Gastrocnemius medialis (tissue), 4 donors: ENCODE measurements at regions of chr14 and their contacts with region 1.

Region 1: DNA sequence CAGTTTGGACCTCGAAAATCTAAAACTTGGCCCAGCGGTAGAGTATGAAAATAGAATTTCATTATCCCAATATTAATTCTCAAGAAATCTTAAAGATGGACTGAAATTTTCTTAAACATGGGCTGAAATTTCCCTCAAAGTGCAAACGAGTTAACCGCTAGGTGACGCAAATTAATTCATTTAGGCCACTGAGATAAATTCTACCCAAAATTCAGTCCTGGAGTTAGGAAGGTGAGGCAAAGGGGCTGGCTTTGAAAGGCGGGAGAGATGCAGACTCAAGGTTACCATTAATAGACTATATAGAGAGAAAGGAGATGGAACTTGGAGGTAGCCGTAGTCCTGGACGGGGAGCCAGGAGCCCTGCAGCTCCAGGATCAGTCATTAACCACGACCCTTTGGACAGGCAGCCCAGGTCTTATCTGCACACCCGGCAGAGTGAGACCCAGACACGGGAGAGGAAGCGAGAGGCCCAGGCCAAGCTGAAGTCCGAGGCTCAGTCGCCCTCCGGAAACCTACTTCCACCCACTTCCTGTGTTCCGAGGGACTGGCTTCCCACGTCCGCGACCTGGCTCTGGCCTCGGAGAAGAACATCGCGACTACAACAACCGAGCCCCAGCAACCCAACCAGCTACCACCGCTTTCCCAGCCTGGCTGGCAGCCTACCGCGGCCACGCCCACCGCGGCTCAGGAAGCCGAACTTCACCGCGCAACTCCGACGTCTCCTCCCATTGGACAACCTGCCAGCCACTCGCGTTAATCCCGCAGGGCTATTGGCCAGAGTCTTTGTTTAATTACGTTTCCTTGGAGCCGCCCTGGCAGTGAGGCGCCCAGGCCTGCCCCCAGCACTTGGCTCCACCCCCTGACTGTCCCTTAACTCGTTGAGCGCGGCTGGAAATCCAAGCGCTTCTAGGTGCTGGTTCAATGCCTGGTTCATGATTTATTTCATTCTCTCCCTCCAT is at the start of gene EFCAB11:
- DNase-seq: peak; percentile 96 to 98
- ATAC-seq: peak; percentile 90 to 91
- H3K4me3 ChIP-seq: peak within 1 kb of the TSS; percentile 63 to 99 (median 73)
- H3K27ac ChIP-seq: peak within 1 kb of the TSS; percentile 82 to 87 (median 84)
- H3K4me1 ChIP-seq: peaks cover 10 to 13% of the 10 kb centered on the region in 2 donors
- H3K27me3 ChIP-seq: no peaks in the 10 kb centered on the region
- CTCF ChIP-seq: no peak
- POLR2A ChIP-seq: no peak
- total RNA-seq, gene EFCAB11: 0.69 to 1.6 (median 1.6) TPM

Region 2: GRCh38 chr14:87992718-87993628 is 1961.4 kb before region 1 on chr14 and contains the start of gene GALC:
- in situ Hi-C with region 1: no loop called
- intact Hi-C with region 1: loop called (anchors 5 kb)
- DNase-seq: peak; percentile 88 to 89
- ATAC-seq: peak; percentile 91 to 93
- H3K4me3 ChIP-seq: peak within 1 kb of the TSS; percentile 74 to 88 (median 80)
- H3K27ac ChIP-seq: peak within 1 kb of the TSS; percentile 86 to 92 (median 88)
- H3K4me1 ChIP-seq: peaks cover 13 to 18% of the 10 kb centered on the region in 2 donors
- H3K27me3 ChIP-seq: no peaks in the 10 kb centered on the region
- CTCF ChIP-seq: no peak
- POLR2A ChIP-seq: peak in 1 of 2 donors; percentile 54
- total RNA-seq, gene GALC: 10.5 to 23.2 (median 14.6) TPM

Region 3: GRCh38 chr14:88385345-88386101 is 1568.8 kb before region 1 on chr14 and contains the start of gene SPATA7:
- in situ Hi-C with region 1: no loop called
- intact Hi-C with region 1: loop called (anchors 10 kb)
- DNase-seq: peak; percentile 80 to 84
- ATAC-seq: peak; percentile 93 to 98
- H3K4me3 ChIP-seq: peak within 1 kb of the TSS; percentile 83 to 98 (median 91)
- H3K27ac ChIP-seq: peak within 1 kb of the TSS; percentile 71 to 82 (median 77)
- H3K4me1 ChIP-seq: peaks cover 13% of the 10 kb centered on the region in 2 donors
- H3K27me3 ChIP-seq: no peaks in the 10 kb centered on the region
- CTCF ChIP-seq: no peak
- POLR2A ChIP-seq: peak; percentile 51 to 53
- total RNA-seq, gene SPATA7: 7.2 to 11.2 (median 10.1) TPM

Region 4: GRCh38 chr14:88551094-88551870 is 1403.1 kb before region 1 on chr14:
- in situ Hi-C with region 1: no loop called
- intact Hi-C with region 1: loop called (anchors 10 kb)
- DNase-seq: peak; percentile 55 to 77
- ATAC-seq: peak; percentile 81 to 83
- H3K4me3 ChIP-seq: peak overlapping the region; percentile 74 to 82 (median 77)
- H3K27ac ChIP-seq: peak overlapping the region; percentile 79 to 94 (median 84)
- H3K4me1 ChIP-seq: peaks cover 24 to 35% of the 10 kb centered on the region in 2 donors
- H3K27me3 ChIP-seq: no peaks in the 10 kb centered on the region
- CTCF ChIP-seq: peak; percentile 30 to 47 (median 43)
- POLR2A ChIP-seq: peak; percentile 49 to 56

Region 5: GRCh38 chr14:89701211-89702043 is 252.9 kb before region 1 on chr14:
- in situ Hi-C with region 1: no loop called
- intact Hi-C with region 1: loop called (anchors 2 kb)
- DNase-seq: peak; percentile 67 to 78
- ATAC-seq: peak; percentile 80 to 82
- H3K4me3 ChIP-seq: peak overlapping the region; percentile 61 to 74 (median 68)
- H3K27ac ChIP-seq: peak overlapping the region; percentile 41 to 72 (median 68)
- H3K4me1 ChIP-seq: peaks cover 12 to 17% of the 10 kb centered on the region in 2 donors
- H3K27me3 ChIP-seq: no peaks in the 10 kb centered on the region
- CTCF ChIP-seq: no peak
- POLR2A ChIP-seq: no peak

Region 6: DNA sequence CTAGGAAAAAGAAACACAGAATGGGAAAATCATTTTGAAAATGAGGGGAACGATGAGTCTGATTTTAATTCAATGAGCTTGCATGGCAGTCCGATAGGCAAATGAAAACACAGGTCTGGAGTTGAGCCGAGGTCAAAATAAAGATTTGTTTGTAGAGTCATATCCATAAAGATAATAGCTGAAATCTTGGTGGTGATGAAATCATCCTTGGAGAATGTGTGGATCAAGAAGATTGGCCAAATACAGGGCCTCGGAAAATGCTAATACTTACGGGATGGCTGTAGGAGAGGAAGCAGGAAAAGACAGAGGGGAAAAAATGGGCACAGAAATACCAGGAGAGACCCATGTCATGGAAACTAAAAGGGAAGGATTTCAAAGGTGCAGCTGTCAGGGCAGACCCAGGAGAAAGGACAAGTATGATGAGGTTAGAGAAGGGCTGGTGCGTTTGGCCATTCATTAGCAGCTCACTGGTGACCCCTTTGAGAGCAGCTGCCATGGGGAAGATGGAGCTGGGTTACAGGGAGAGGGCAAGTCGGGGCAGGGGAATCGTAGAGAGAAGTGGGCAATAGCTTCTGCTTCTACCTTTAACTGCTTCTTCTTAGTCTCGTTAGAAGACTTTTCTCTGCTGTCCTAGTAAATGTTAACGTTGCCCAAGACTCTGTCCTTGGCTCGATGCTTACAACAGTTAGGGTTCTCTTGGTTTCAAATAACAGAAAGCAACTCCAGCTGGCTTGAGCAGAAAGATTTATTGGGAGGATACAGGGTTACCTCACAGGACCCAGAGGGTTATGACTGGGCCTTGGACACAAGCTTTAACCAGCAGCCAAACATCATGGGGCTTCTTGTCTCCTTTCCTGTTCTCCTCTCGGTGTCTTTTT is 161.6 kb before region 1 on chr14:
- in situ Hi-C with region 1: no loop called
- intact Hi-C with region 1: no loop called
- DNase-seq: peak; percentile 87 to 88
- ATAC-seq: peak; percentile 98 to 99
- H3K4me3 ChIP-seq: peak overlapping the region in 1 of 4 donors; percentile 29
- H3K27ac ChIP-seq: peak overlapping the region; percentile 81 to 91 (median 89)
- H3K4me1 ChIP-seq: peaks cover 18 to 26% of the 10 kb centered on the region in 2 donors
- H3K27me3 ChIP-seq: no peaks in the 10 kb centered on the region
- CTCF ChIP-seq: no peak
- POLR2A ChIP-seq: no peak

Region 7: DNA sequence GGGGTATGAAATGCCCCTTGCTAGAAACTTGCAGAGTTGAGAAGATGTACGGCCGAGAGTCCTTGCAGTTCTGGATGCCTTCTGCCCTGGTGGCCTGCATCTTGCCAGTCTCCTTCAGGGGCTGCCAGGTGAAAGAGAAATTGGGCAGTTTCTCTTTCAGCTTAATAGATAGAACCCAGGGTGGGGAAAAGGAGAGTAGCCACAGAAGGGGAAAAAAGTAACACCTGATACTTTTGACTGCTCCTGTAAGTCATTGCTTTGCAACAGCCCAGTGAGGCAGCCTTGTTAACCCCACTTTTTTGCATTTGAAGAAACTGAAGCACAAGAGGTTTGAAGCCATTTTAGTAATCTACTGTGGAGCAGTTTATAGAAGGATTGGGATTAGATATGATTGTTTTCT is 29.0 kb after region 1 on chr14:
- in situ Hi-C with region 1: no loop called
- intact Hi-C with region 1: no loop called
- DNase-seq: no peak
- ATAC-seq: no peak
- H3K4me3 ChIP-seq: no peak overlapping the region
- H3K27ac ChIP-seq: no peak overlapping the region
- H3K4me1 ChIP-seq: no peaks in the 10 kb centered on the region
- H3K27me3 ChIP-seq: no peaks in the 10 kb centered on the region
- CTCF ChIP-seq: no peak
- POLR2A ChIP-seq: no peak

Region 8: GRCh38 chr14:90256354-90257131 is 302.2 kb after region 1 on chr14 and contains the start of gene PSMC1:
- in situ Hi-C with region 1: loop called in 2 of 4 experiments (anchors 25 kb)
- intact Hi-C with region 1: no loop called
- DNase-seq: peak; percentile 87 to 92
- ATAC-seq: peak; percentile 97 to 98
- H3K4me3 ChIP-seq: peak within 1 kb of the TSS; percentile 83 to 99 (median 89)
- H3K27ac ChIP-seq: peak within 1 kb of the TSS; percentile 89 to 98 (median 94)
- H3K4me1 ChIP-seq: peaks cover 20% of the 10 kb centered on the region in 2 donors
- H3K27me3 ChIP-seq: no peaks in the 10 kb centered on the region
- CTCF ChIP-seq: no peak
- POLR2A ChIP-seq: peak; percentile 58 to 80
- total RNA-seq, gene PSMC1: 374 to 642 (median 528) TPM

Region 9: DNA sequence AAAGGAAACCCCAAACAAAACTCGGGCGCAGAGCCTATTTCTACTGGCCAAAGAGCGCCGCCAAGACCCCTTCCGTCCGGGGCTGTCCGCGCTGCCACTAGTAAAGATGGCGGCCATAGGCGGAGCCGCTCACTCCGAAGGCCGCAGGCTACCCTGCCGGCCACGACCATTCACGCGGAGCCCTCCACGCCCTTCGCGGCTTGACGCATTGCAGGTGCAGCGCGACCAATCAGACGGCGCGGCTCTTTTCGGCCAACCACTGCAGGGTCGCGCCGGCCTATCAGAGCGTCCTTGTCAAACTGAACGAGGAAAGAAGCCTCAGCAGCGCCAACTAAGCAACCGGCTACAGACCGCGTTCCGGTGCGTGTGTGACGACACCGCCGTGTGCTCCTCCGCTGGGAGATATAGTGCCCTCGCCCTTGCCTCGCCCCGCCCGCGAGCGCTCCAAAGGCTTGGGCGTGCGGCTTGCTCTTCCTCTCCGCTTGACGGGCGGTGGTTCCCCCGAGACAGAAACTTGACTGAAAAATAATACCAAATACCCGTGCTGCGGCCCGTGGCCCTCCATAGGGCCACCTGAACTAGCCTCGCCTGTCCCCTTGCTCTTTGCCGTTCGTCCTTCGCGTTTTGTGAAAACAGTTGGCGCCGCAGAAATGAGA is 428.9 kb after region 1 on chr14:
- in situ Hi-C with region 1: no loop called
- intact Hi-C with region 1: loop called (anchors 5 kb)
- DNase-seq: peak; percentile 99 to 100
- ATAC-seq: peak; percentile 77 to 81
- H3K4me3 ChIP-seq: peak overlapping the region; percentile 69 to 80 (median 78)
- H3K27ac ChIP-seq: peak overlapping the region; percentile 97 to 99 (median 98)
- H3K4me1 ChIP-seq: peaks cover 29 to 40% of the 10 kb centered on the region in 2 donors
- H3K27me3 ChIP-seq: no peaks in the 10 kb centered on the region
- CTCF ChIP-seq: peak in 2 of 5 experiments; percentile 27 to 39
- POLR2A ChIP-seq: peak; percentile 94 to 98